ENCODE measurements at regions of chr11 and their contacts with region 1.

Region 1: GRCh38 chr11:43358801-43359421 is at the start of gene TTC17:
- DNase-seq: peak; percentile 93
- ATAC-seq: peak; percentile 90
- H3K4me3 Mint-ChIP-seq: peak within 1 kb of the TSS; percentile 99
- H3K27ac Mint-ChIP-seq: peak within 1 kb of the TSS; percentile 99
- H3K4me1 Mint-ChIP-seq: peaks cover 38% of the 10 kb centered on the region
- H3K27me3 Mint-ChIP-seq: no peaks in the 10 kb centered on the region
- CTCF ChIP-seq: no peak
- total RNA-seq, gene TTC17: 102 and 127 TPM in 2 replicates

Region 2: GRCh38 chr11:43311791-43312607 is 46.9 kb before region 1 on chr11 and contains the start of gene API5:
- CTCF ChIA-PET with region 1: interaction called, 19 read pairs
- POLR2A ChIA-PET with region 1: interaction called, 56 read pairs
- intact Hi-C with region 1: loop called (anchors 1 kb)
- DNase-seq: peak; percentile 88
- ATAC-seq: peak; percentile 98
- H3K4me3 Mint-ChIP-seq: peak within 1 kb of the TSS; percentile 98
- H3K27ac Mint-ChIP-seq: peak within 1 kb of the TSS; percentile 89
- H3K4me1 Mint-ChIP-seq: peaks cover 47% of the 10 kb centered on the region
- H3K27me3 Mint-ChIP-seq: no peaks in the 10 kb centered on the region
- CTCF ChIP-seq: no peak
- total RNA-seq, gene API5: 122 and 123 TPM in 2 replicates

Region 3: GRCh38 chr11:43396617-43397016 is 37.7 kb after region 1 on chr11:
- CTCF ChIA-PET with region 1: no interaction called
- POLR2A ChIA-PET with region 1: no interaction called
- intact Hi-C with region 1: loop called (anchors 2 kb)
- DNase-seq: no peak
- ATAC-seq: no peak
- H3K4me3 Mint-ChIP-seq: no peak overlapping the region
- H3K27ac Mint-ChIP-seq: no peak overlapping the region
- H3K4me1 Mint-ChIP-seq: no peaks in the 10 kb centered on the region
- H3K27me3 Mint-ChIP-seq: no peaks in the 10 kb centered on the region
- CTCF ChIP-seq: no peak

Region 4: DNA sequence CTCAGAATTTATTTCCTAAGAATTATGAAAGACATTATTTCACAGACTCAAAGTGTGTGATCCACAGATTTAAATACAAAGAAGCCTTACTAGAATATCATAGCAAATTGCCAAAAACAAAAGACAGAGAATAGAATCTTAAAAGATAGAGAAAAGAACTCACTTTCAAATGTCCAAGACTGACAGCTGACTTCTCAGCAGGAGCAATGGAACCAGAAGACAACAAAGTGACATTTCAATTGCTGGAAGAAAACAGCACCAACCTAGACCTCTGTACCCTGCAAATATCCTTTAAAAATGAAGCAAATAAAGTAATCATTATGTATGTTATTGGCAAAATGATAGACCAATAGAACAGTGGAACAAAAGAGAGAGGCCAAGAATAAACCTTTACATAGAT is 109.0 kb after region 1 on chr11:
- CTCF ChIA-PET with region 1: no interaction called
- POLR2A ChIA-PET with region 1: no interaction called
- intact Hi-C with region 1: no loop called
- DNase-seq: no peak
- ATAC-seq: no peak
- H3K4me3 Mint-ChIP-seq: no peak overlapping the region
- H3K27ac Mint-ChIP-seq: no peak overlapping the region
- H3K4me1 Mint-ChIP-seq: no peaks in the 10 kb centered on the region
- H3K27me3 Mint-ChIP-seq: no peaks in the 10 kb centered on the region
- CTCF ChIP-seq: no peak

Region 5: GRCh38 chr11:43680521-43681400 is 321.9 kb after region 1 on chr11 and contains the start of gene HSD17B12:
- CTCF ChIA-PET with region 1: no interaction called
- POLR2A ChIA-PET with region 1: interaction called, 7 read pairs
- intact Hi-C with region 1: loop called (anchors 1 kb)
- DNase-seq: peak; percentile 96
- ATAC-seq: peak; percentile 96
- H3K4me3 Mint-ChIP-seq: peak within 1 kb of the TSS; percentile 93
- H3K27ac Mint-ChIP-seq: peak within 1 kb of the TSS; percentile 92
- H3K4me1 Mint-ChIP-seq: peaks cover 38% of the 10 kb centered on the region
- H3K27me3 Mint-ChIP-seq: no peaks in the 10 kb centered on the region
- CTCF ChIP-seq: no peak
- total RNA-seq, gene HSD17B12: 56.8 and 58.3 TPM in 2 replicates

Region 6: GRCh38 chr11:44065841-44066731 is 707.2 kb after region 1 on chr11 and contains the start of gene ACCS:
- CTCF ChIA-PET with region 1: no interaction called
- POLR2A ChIA-PET with region 1: no interaction called
- intact Hi-C with region 1: loop called (anchors 5 kb)
- DNase-seq: peak; percentile 86
- ATAC-seq: peak; percentile 97
- H3K4me3 Mint-ChIP-seq: peak within 1 kb of the TSS; percentile 92
- H3K27ac Mint-ChIP-seq: peak within 1 kb of the TSS; percentile 87
- H3K4me1 Mint-ChIP-seq: peaks cover 19% of the 10 kb centered on the region
- H3K27me3 Mint-ChIP-seq: no peaks in the 10 kb centered on the region
- CTCF ChIP-seq: peak; percentile 58
- total RNA-seq, gene ACCS: 22.4 and 27.0 TPM in 2 replicates

Measured in activated B cell treated with CpG ODN at 0.5 μM for 24 hours (primary cell).